GM12878 (cell line): ENCODE measurements at regions of chr12 and their contacts with region 1.

Region 1: GRCh38 chr12:8078398-8078797 is 3.7 kb upstream of the NECAP1 start:
- DNase-seq: no peak
- ATAC-seq: peak; percentile 11; the same call in 1 of the 3 replicates
- H3K4me3 ChIP-seq: no peak overlapping the region
- H3K27ac ChIP-seq: no peak overlapping the region
- H3K4me1 ChIP-seq: peaks cover 5% of the 10 kb centered on the region; the same call in 1 of the 2 replicates
- H3K27me3 ChIP-seq: no peaks in the 10 kb centered on the region
- CTCF ChIP-seq: peak; percentile 12 to 52 (median 36); a peak in 4 of 6 replicates
- EP300 ChIP-seq: no peak
- POLR2A ChIP-seq: no peak
- RAD21 ChIP-seq: peak; percentile 72

Region 2: GRCh38 chr12:7869127-7869526 is 209.3 kb before region 1 on chr12:
- CTCF ChIA-PET with region 1: no interaction called
- POLR2A ChIA-PET with region 1: no interaction called
- RAD21 ChIA-PET with region 1: no interaction called
- SMC1A ChIA-PET with region 1: no interaction called
- in situ Hi-C with region 1: no loop called
- intact Hi-C with region 1: loop called (anchors 10 kb)
- DNase-seq: no peak
- ATAC-seq: no peak
- H3K4me3 ChIP-seq: no peak overlapping the region
- H3K27ac ChIP-seq: no peak overlapping the region
- H3K4me1 ChIP-seq: no peaks in the 10 kb centered on the region
- H3K27me3 ChIP-seq: no peaks in the 10 kb centered on the region; a peak in 2 of 4 replicates
- CTCF ChIP-seq: no peak
- EP300 ChIP-seq: no peak
- POLR2A ChIP-seq: no peak
- RAD21 ChIP-seq: no peak

Region 3: GRCh38 chr12:8038659-8039114 is 39.7 kb before region 1 on chr12:
- CTCF ChIA-PET with region 1: interaction called, 115 read pairs
- POLR2A ChIA-PET with region 1: no interaction called
- RAD21 ChIA-PET with region 1: interaction called, 8 read pairs
- SMC1A ChIA-PET with region 1: interaction called, 5 read pairs
- in situ Hi-C with region 1: no loop called
- intact Hi-C with region 1: loop called (anchors 5 kb)
- DNase-seq: no peak
- ATAC-seq: peak; percentile 44
- H3K4me3 ChIP-seq: peak overlapping the region; percentile 10; the same call in 1 of the 2 replicates
- H3K27ac ChIP-seq: no peak overlapping the region; the same call in 1 of the 2 replicates
- H3K4me1 ChIP-seq: peaks cover 12% of the 10 kb centered on the region
- H3K27me3 ChIP-seq: no peaks in the 10 kb centered on the region
- CTCF ChIP-seq: no peak
- EP300 ChIP-seq: no peak
- POLR2A ChIP-seq: no peak
- RAD21 ChIP-seq: no peak

Region 4: DNA sequence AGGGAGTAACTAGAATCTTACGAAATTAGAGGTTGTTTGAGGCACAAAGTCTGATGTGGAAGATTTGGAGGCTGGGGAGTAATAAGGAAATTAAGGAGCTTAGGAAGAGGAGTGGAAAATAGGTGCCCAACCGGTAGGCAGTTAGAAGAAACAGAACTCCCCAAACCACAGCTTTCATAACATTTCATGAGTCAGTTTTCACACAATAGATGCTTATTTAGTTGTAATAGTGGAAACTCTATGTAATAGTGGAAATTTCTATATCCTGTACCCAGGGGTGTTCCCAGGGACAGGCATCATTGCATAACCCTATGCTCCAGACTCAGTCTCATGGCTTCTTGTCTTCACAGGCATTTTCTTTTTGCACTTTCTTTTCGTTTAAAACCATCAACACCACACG is 20.6 kb before region 1 on chr12:
- CTCF ChIA-PET with region 1: interaction called, 7 read pairs
- POLR2A ChIA-PET with region 1: no interaction called
- RAD21 ChIA-PET with region 1: no interaction called
- SMC1A ChIA-PET with region 1: interaction called, 10 read pairs
- in situ Hi-C with region 1: no loop called
- intact Hi-C with region 1: no loop called
- DNase-seq: no peak
- ATAC-seq: no peak
- H3K4me3 ChIP-seq: no peak overlapping the region
- H3K27ac ChIP-seq: no peak overlapping the region
- H3K4me1 ChIP-seq: no peaks in the 10 kb centered on the region
- H3K27me3 ChIP-seq: no peaks in the 10 kb centered on the region
- CTCF ChIP-seq: no peak
- EP300 ChIP-seq: no peak
- POLR2A ChIP-seq: no peak
- RAD21 ChIP-seq: no peak